ENCODE measurements at regions of chr1 and their contacts with region 1.

Region 1: DNA sequence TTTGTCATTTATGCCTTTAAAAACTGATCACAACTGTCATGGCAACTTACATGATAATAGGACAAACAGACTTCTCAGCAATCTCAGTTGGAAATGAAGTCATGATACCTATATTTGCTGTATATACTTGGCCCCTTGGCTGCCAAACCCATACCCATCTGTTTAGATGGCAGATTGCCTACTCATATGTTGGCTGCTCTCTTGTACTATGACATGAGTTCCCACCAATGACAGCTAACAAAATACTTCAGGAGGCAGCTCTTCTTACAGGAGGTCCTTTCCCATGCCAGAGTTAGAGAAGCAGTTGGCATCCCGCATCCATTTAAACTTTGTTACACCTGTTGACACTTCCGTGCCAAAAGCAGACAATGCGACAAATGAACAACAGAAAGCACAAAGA is 603.1 kb upstream of the ADGRL2 start:
- DNase-seq: no peak
- H3K4me3 ChIP-seq: no peak overlapping the region
- H3K27ac ChIP-seq: no peak overlapping the region
- H3K4me1 ChIP-seq: no peaks in the 10 kb centered on the region
- H3K27me3 ChIP-seq: no peaks in the 10 kb centered on the region
- CTCF ChIP-seq: no peak

Region 2: GRCh38 chr1:81208441-81208840 is 10.8 kb after region 1 on chr1:
- intact Hi-C with region 1: loop called (anchors 1 kb)
- DNase-seq: no peak
- H3K4me3 ChIP-seq: no peak overlapping the region
- H3K27ac ChIP-seq: no peak overlapping the region
- H3K4me1 ChIP-seq: no peaks in the 10 kb centered on the region
- H3K27me3 ChIP-seq: no peaks in the 10 kb centered on the region
- CTCF ChIP-seq: no peak

Region 3: GRCh38 chr1:81252471-81253151 is 55.0 kb after region 1 on chr1:
- intact Hi-C with region 1: no loop called
- DNase-seq: no peak
- H3K4me3 ChIP-seq: no peak overlapping the region
- H3K27ac ChIP-seq: no peak overlapping the region
- H3K4me1 ChIP-seq: no peaks in the 10 kb centered on the region
- H3K27me3 ChIP-seq: no peaks in the 10 kb centered on the region
- CTCF ChIP-seq: no peak

Region 4: GRCh38 chr1:81304187-81304586 is 106.6 kb after region 1 on chr1:
- intact Hi-C with region 1: no loop called
- DNase-seq: no peak
- H3K4me3 ChIP-seq: no peak overlapping the region
- H3K27ac ChIP-seq: no peak overlapping the region
- H3K4me1 ChIP-seq: peaks cover 0 to 5% (median 0%) of the 10 kb centered on the region in 4 donors
- H3K27me3 ChIP-seq: no peaks in the 10 kb centered on the region
- CTCF ChIP-seq: no peak